A549 (cell line): ENCODE measurements at regions of chr19 and their contacts with region 1.

Region 1: GRCh38 chr19:47391510-47392223 is 27.7 kb downstream of the MEIS3 start:
- DNase-seq: peak; percentile 75 to 81
- ATAC-seq: peak; percentile 91 to 93
- H3K4me3 ChIP-seq: no peak overlapping the region
- H3K27ac ChIP-seq: peak overlapping the region in 1 of 2 experiments; percentile 42; a peak in 1 of 6 replicates
- H3K4me1 ChIP-seq: no peaks in the 10 kb centered on the region
- CTCF ChIP-seq: peak; percentile 98
- EP300 ChIP-seq: no peak
- POLR2A ChIP-seq: no peak
- RAD21 ChIP-seq: peak; percentile 89 to 91

Region 2: DNA sequence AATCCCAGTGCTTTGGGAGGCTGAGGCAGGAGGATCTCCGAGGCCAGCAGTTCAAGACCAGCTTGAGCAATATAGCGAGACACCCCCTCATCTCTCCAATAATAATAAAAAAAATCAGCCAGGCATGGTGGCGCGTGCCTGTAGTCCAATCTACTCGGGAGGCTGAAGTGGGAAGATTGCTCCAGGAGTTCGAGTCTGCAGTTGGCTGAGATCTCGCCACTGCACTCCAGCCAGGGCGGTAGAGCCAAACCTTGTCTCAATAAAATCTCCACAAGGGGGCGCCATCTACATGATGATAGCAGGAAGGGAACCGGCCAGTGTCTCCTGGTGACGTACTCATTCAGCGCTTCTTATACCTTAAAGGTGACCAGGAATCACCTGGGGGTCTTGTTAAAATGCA is 95.6 kb before region 1 on chr19:
- CTCF ChIA-PET with region 1: interaction called, 198 read pairs
- POLR2A ChIA-PET with region 1: no interaction called
- DNase-seq: peak; percentile 88
- ATAC-seq: peak; percentile 95 to 99
- H3K4me3 ChIP-seq: no peak overlapping the region
- H3K27ac ChIP-seq: peak overlapping the region; percentile 44 to 59; a peak in 4 of 6 replicates
- H3K4me1 ChIP-seq: peaks cover 5% of the 10 kb centered on the region; the same call in 1 of the 3 replicates
- CTCF ChIP-seq: peak; percentile 98
- EP300 ChIP-seq: no peak
- POLR2A ChIP-seq: no peak
- RAD21 ChIP-seq: peak; percentile 97 to 99

Region 3: GRCh38 chr19:47330466-47330869 is 61.2 kb before region 1 on chr19:
- CTCF ChIA-PET with region 1: interaction called, 17 read pairs
- POLR2A ChIA-PET with region 1: interaction called, 3 read pairs
- DNase-seq: no peak
- ATAC-seq: no peak
- H3K4me3 ChIP-seq: no peak overlapping the region
- H3K27ac ChIP-seq: peak overlapping the region; percentile 45 to 49; a peak in 4 of 6 replicates
- H3K4me1 ChIP-seq: peaks cover 24% of the 10 kb centered on the region
- CTCF ChIP-seq: no peak
- EP300 ChIP-seq: no peak
- POLR2A ChIP-seq: no peak
- RAD21 ChIP-seq: no peak

Region 4: GRCh38 chr19:47357788-47358680 is 33.6 kb before region 1 on chr19:
- CTCF ChIA-PET with region 1: interaction called, 43 read pairs
- POLR2A ChIA-PET with region 1: no interaction called
- DNase-seq: peak; percentile 49 to 72
- ATAC-seq: peak; percentile 75 to 86
- H3K4me3 ChIP-seq: no peak overlapping the region
- H3K27ac ChIP-seq: no peak overlapping the region
- H3K4me1 ChIP-seq: no peaks in the 10 kb centered on the region
- CTCF ChIP-seq: peak; percentile 51; the same call in 2 of the 3 replicates
- EP300 ChIP-seq: no peak
- POLR2A ChIP-seq: no peak
- RAD21 ChIP-seq: peak; percentile 29 to 35; a peak in 1 of 5 replicates

Region 5: GRCh38 chr19:47414469-47414868 is 22.8 kb after region 1 on chr19:
- CTCF ChIA-PET with region 1: interaction called, 40 read pairs
- POLR2A ChIA-PET with region 1: no interaction called
- DNase-seq: peak in 1 of 2 experiments; percentile 82
- ATAC-seq: peak; percentile 68 to 81; a peak in 5 of 6 replicates
- H3K4me3 ChIP-seq: no peak overlapping the region
- H3K27ac ChIP-seq: no peak overlapping the region
- H3K4me1 ChIP-seq: peaks cover 17% of the 10 kb centered on the region
- CTCF ChIP-seq: peak; percentile 52
- EP300 ChIP-seq: no peak
- POLR2A ChIP-seq: no peak
- RAD21 ChIP-seq: peak; percentile 67 to 78

Region 6: DNA sequence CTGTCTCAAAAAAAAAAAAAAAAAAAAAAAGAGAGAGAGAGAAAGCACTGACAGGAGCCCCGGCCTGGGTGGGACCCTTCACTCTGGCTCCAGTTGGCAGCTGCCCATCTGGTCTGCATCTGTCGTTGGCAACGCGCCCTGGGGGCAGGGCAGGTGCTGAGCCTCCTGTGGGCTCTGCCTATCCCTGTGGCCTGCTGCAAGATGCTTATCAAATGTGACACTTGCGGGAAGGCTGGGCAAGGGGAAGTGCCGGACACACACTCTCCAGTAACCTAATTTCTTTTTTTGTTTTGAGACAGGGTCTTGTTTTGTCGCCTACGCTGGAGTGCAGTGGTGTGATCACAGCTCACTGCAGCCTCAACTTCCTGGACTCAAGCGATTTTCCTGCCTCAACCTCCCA is 103.1 kb after region 1 on chr19:
- CTCF ChIA-PET with region 1: no interaction called
- POLR2A ChIA-PET with region 1: no interaction called
- DNase-seq: no peak
- ATAC-seq: no peak
- H3K4me3 ChIP-seq: no peak overlapping the region
- H3K27ac ChIP-seq: no peak overlapping the region
- H3K4me1 ChIP-seq: no peaks in the 10 kb centered on the region
- CTCF ChIP-seq: no peak
- EP300 ChIP-seq: no peak
- POLR2A ChIP-seq: no peak
- RAD21 ChIP-seq: no peak